A673 (cell line): ENCODE measurements at regions of chr16 and their contacts with region 1.

Region 1: DNA sequence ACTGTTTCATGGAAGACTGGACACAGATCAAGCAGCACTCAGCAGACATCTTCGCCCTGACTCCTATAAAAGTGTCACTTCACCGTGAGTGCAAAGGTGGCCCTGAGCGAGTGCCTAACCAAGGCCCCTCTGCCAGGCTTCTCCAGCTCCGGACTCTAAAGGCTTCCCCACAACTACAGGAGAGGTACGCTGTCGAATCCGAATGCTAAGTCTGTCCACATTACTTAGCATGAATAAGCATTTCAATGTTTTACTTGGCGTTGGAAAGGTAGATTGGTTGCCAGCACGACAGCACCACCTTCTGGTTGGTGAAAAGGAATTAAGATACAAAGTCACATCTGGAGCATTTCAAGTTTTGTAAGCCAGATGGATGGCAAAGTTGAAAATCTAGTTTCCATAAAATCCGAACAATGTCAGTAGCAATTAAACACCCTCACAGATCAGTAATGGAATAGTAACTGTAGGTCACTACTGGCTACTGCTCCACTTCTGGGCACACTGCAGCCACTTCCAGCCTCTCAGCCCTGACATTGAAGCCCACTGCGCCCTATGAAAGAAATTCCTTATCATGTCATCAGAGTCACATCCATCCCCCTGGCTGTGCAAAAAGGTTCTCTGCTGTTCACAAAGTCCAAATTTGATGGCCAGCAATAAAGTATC is 100.9 kb downstream of the PARN start:
- DNase-seq: peak; percentile 87
- H3K4me3 ChIP-seq: no peak overlapping the region
- H3K27ac ChIP-seq: peak overlapping the region; percentile 11
- H3K4me1 ChIP-seq: peaks cover 18% of the 10 kb centered on the region
- H3K27me3 ChIP-seq: no peaks in the 10 kb centered on the region
- CTCF ChIP-seq: peak; percentile 78

Region 2: GRCh38 chr16:14070877-14071575 is 458.1 kb before region 1 on chr16 and contains the start of gene MRTFB:
- CTCF ChIA-PET with region 1: no interaction called
- POLR2A ChIA-PET with region 1: no interaction called
- intact Hi-C with region 1: loop called (anchors 5 kb)
- DNase-seq: peak; percentile 76
- H3K4me3 ChIP-seq: peak within 1 kb of the TSS; percentile 74
- H3K27ac ChIP-seq: peak within 1 kb of the TSS; percentile 88
- H3K4me1 ChIP-seq: no peaks in the 10 kb centered on the region
- H3K27me3 ChIP-seq: no peaks in the 10 kb centered on the region
- CTCF ChIP-seq: no peak
- total RNA-seq, gene MRTFB: 29.8 and 35.7 TPM in 2 replicates

Region 3: GRCh38 chr16:14300705-14301168 is 228.4 kb before region 1 on chr16:
- CTCF ChIA-PET with region 1: no interaction called
- POLR2A ChIA-PET with region 1: no interaction called
- intact Hi-C with region 1: loop called (anchors 2 kb)
- DNase-seq: peak; percentile 67
- H3K4me3 ChIP-seq: peak overlapping the region; percentile 49
- H3K27ac ChIP-seq: no peak overlapping the region
- H3K4me1 ChIP-seq: peaks cover 9% of the 10 kb centered on the region
- H3K27me3 ChIP-seq: no peaks in the 10 kb centered on the region
- CTCF ChIP-seq: peak; percentile 55